Astrocyte of the spinal cord (primary cell): ENCODE measurements at regions of chr2 and their contacts with region 1.

Region 1: DNA sequence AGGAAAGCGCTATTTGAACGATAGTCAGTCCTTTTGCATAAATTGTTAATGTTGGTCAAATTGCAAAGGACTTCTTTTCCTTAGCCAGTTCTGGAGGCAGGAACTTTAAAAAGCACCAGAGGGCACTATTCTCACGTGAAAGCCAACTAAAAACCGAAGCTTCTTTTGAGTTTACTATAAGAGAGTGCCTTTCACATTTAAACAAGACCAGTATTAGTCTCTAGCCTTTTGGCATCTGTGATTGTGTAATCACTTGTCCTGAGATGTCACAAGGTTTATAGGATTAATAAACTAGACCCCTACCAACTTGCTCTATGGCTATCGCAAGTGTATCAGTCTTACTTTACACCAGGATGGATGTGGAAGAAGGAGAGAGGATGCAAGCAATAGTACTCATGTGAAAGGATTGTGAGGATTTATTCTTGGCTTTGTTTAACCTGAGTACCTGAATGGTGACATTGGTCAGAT is 14.4 kb upstream of the STAT4 start:
- DNase-seq: peak; percentile 79
- H3K4me3 ChIP-seq: no peak overlapping the region
- CTCF ChIP-seq: peak; percentile 68

Region 2: DNA sequence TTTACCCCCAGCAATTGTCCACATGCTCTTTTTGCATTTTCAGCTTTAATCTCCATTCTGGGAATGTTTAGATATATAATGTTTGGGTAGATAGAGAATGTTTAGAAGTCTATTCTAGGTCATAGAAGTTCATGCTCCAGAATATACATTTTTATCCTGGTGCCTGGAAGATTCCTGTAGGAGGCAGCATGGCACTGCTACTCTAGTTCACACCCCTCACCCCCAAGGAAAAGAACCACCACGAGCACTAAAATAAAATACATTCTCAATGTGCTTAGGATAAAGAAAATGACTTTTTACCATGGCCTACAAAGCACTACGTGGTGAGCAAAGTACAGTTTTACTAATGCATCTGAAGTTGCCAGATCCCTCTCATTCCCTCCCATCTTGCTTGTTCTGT is 133.8 kb after region 1 on chr2:
- in situ Hi-C with region 1: no loop called
- DNase-seq: no peak
- H3K4me3 ChIP-seq: no peak overlapping the region
- CTCF ChIP-seq: peak; percentile 29

Region 3: DNA sequence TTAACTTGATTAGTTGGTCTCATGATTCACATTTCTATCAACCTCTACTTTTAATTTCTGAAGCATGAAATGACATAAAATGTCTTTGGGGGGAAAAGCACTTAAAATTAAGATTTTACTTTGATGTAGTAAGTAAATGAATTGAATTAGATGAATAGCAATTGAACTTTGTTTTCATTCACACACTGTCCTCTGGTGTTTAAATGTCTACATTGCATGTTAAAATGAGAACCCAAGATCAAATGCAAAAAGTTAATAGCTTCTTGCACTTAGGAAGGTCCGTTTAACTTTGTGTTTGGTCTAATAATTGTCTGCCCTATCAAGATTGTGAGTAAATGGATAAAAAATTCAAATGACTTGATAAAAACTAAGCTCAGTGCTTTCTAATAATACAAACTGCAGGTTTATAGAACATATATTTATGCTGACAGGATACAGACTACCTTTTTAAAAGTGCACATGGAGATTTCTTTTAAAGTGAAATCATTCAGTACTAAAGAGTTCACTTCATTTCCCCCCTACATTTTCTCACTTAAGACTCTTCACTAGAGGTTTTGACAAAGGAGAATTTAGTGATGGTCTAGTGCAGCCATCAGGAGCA is 356.5 kb after region 1 on chr2:
- in situ Hi-C with region 1: loop called (anchors 25 kb)
- DNase-seq: peak; percentile 48
- H3K4me3 ChIP-seq: no peak overlapping the region
- CTCF ChIP-seq: peak; percentile 76

Region 4: GRCh38 chr2:191677646-191678436 is 512.6 kb after region 1 on chr2 and contains the start of gene NABP1:
- in situ Hi-C with region 1: no loop called
- DNase-seq: peak; percentile 99
- H3K4me3 ChIP-seq: peak within 1 kb of the TSS; percentile 83
- CTCF ChIP-seq: no peak